Mammary epithelial cell (primary cell): ENCODE measurements at regions of chr1 and their contacts with region 1.

Region 1: DNA sequence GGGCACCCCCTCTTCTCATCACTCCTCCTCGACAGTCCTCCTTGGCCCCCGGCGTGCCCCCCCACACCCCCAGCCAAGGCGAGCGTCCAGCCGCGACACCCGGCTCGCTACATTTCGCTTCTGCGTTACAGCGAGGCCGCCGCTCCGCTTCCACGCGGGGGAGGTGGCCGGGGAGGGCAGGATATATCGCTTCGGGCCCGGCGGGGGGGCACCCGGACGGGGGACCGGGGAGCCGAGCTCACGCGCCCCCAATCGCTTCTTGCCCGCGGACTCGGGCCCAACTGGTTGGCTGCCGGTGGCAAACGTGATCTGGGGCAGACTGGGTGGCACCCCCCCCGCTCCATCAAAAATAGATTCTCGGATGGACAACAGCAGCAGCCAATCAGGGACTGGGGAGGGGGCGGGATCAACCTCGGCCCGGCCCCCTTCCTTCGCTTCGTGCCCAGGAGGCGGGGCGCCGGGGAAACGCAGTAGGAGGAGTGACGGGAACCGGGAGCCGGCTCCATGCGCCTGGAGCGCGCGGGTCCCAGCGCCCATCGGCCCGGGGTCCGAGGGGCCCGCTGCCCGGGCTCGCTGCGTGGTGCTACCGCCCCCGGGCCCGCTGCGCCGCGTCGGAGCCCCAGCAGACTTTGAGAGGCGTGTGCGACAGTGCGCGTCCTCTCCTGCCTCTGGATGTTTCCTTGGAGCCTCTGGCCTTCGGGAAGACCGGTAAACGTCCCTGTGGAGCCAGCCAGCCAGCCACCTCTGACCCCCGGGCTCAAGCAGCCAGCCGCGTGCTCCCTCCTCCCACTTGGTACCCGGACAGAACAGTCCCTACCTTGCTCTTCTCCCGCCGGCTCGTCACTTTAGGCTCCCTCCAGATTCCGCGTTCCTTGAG is at the start of gene SLC41A1:
- DNase-seq: peak; percentile 89
- H3K4me3 ChIP-seq: peak within 1 kb of the TSS; percentile 49 to 90 (median 66)
- H3K27ac ChIP-seq: peak within 1 kb of the TSS; percentile 50
- H3K4me1 ChIP-seq: peaks cover 15% of the 10 kb centered on the region
- H3K27me3 ChIP-seq: no peaks in the 10 kb centered on the region
- CTCF ChIP-seq: no peak
- total RNA-seq, gene SLC41A1: 24.7 to 43.2 TPM

Region 2: GRCh38 chr1:205645519-205645918 is 167.6 kb before region 1 on chr1:
- CTCF ChIA-PET with region 1: no interaction called
- dilution Hi-C with region 1: no loop called
- in situ Hi-C with region 1: no loop called
- intact Hi-C with region 1: no loop called
- DNase-seq: no peak
- H3K4me3 ChIP-seq: no peak overlapping the region
- H3K27ac ChIP-seq: no peak overlapping the region
- H3K4me1 ChIP-seq: no peaks in the 10 kb centered on the region
- H3K27me3 ChIP-seq: no peaks in the 10 kb centered on the region
- CTCF ChIP-seq: no peak

Region 3: DNA sequence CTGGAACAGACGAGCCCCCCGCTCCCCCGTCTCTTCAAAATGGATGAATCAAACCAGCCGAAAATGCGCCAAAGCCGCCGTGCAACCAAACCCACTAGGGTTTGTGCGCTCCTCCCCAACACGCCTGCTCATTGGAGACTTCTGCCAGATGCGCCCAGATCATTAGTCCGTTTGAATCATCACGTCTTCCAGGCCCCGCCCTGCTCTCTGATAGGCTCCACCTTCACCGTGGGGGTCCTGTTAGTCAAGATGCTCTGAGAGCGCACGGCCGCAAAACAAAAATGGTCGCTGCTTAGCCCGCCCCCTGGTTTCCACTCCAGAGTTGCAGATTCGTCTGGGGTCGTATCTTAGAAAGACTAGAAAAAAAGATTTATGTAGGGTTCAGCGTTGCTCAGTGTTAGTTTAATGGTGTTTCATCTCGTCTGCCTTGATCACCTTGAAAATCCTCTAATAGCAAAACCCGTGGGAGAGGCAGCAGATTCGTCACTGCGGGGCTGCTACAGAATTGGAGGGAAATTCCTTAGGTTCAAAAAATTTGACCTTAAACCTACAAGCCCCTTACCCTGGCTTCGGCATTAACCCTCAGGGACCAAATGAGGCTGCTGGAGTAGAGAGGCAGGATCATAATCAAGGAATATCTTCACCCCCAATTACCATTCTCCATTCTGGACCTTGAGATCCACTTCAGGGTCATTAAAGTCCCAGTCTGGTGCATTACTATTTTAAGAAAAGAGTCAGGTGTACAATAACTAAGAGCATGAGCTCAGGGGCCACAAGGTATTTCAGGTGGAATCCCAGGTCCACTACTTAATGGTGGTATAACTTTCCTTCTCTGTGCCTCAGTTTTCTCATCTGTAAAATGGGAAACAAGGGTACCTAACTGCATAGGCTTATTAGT is 62.7 kb before region 1 on chr1 and contains the start of gene NUCKS1:
- CTCF ChIA-PET with region 1: no interaction called
- dilution Hi-C with region 1: no loop called
- in situ Hi-C with region 1: no loop called
- intact Hi-C with region 1: loop called (anchors 1 kb)
- DNase-seq: peak; percentile 99
- H3K4me3 ChIP-seq: peak within 1 kb of the TSS; percentile 66 to 90 (median 74)
- H3K27ac ChIP-seq: peak within 1 kb of the TSS; percentile 87
- H3K4me1 ChIP-seq: peaks cover 16% of the 10 kb centered on the region
- H3K27me3 ChIP-seq: no peaks in the 10 kb centered on the region
- CTCF ChIP-seq: no peak
- total RNA-seq, gene NUCKS1: 94.5 to 160 TPM

Region 4: GRCh38 chr1:205896320-205896719 is 83.2 kb after region 1 on chr1:
- CTCF ChIA-PET with region 1: no interaction called
- dilution Hi-C with region 1: no loop called
- in situ Hi-C with region 1: no loop called
- intact Hi-C with region 1: no loop called
- DNase-seq: no peak
- H3K4me3 ChIP-seq: no peak overlapping the region
- H3K27ac ChIP-seq: no peak overlapping the region
- H3K4me1 ChIP-seq: no peaks in the 10 kb centered on the region
- H3K27me3 ChIP-seq: no peaks in the 10 kb centered on the region
- CTCF ChIP-seq: no peak

Region 5: GRCh38 chr1:205907794-205908193 is 94.7 kb after region 1 on chr1:
- CTCF ChIA-PET with region 1: no interaction called
- dilution Hi-C with region 1: no loop called
- in situ Hi-C with region 1: no loop called
- intact Hi-C with region 1: loop called (anchors 1 kb)
- DNase-seq: peak; percentile 30
- H3K4me3 ChIP-seq: no peak overlapping the region
- H3K27ac ChIP-seq: no peak overlapping the region
- H3K4me1 ChIP-seq: peaks cover 5% of the 10 kb centered on the region
- H3K27me3 ChIP-seq: no peaks in the 10 kb centered on the region
- CTCF ChIP-seq: peak; percentile 72 to 77

Region 6: DNA sequence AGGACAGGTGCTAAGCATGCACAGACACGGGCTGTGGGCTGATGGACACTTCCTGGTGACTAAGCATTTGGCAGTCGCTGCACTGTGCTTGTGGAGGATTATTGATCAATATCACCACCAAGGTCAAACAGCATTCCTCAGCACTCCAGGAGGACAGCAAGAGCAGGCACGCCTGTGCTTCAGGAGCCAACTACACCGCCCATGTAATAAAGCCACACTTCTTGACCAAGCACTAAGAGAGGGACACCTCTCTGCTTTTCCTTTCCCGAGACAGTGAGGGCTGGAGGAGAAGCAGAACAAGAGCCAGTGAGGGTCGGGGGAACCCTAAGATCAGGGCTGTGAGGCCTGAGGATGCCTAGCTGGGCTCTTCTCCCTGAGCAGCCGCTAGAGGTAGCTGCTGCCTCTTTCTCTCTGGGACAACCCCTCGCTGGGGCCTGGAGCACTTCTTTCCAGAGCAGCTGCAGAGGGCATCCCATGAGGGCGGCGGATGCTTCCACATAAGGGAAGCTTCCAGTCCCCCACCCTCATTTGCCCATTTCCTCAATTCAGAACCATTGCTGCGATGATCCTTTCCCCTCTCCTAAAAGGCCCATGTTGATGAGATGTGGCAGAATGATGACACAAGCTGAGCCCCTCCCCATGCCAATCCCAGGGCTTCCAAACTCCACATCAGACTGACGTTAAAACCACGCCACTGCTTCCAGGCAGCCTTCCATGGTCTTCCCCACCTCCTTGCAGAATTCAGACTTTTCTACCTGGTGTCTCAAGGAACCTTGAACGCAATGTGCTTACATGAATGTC is 171.0 kb after region 1 on chr1:
- CTCF ChIA-PET with region 1: no interaction called
- dilution Hi-C with region 1: no loop called
- in situ Hi-C with region 1: no loop called
- intact Hi-C with region 1: loop called (anchors 5 kb)
- DNase-seq: peak; percentile 96
- H3K4me3 ChIP-seq: peak overlapping the region in 1 of 3 experiments; percentile 2
- H3K27ac ChIP-seq: no peak overlapping the region
- H3K4me1 ChIP-seq: peaks cover 32% of the 10 kb centered on the region
- H3K27me3 ChIP-seq: no peaks in the 10 kb centered on the region
- CTCF ChIP-seq: peak; percentile 79 to 90